Left ventricle myocardium superior (tissue), 1 donor: ENCODE measurements at regions of chr5 and their contacts with region 1.

Region 1: GRCh38 chr5:62354028-62354874 is 48.2 kb downstream of the KIF2A start:
- DNase-seq: no peak
- ATAC-seq: peak; percentile 44

Region 2: DNA sequence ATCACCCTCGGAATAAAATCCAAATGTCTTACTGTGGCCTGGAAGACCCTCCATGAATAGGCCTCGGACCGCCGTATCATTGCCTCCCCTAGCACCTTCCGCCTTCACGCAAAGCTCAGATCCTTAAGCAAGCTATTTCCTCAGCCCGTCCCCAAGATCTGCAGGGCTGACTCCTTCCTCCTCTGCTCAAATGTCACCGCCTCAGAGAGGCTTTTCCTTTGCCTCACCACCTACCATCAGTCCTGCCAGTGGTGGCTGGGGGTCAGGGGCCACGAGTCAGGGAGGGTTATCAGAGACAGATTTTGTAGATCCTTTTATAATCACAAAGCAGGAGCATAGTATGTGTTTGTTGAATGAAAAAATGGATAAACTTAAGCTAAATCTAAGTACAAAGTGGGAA is 122.7 kb before region 1 on chr5:
- intact Hi-C with region 1: loop called (anchors 10 kb)
- DNase-seq: no peak
- ATAC-seq: no peak

Region 3: DNA sequence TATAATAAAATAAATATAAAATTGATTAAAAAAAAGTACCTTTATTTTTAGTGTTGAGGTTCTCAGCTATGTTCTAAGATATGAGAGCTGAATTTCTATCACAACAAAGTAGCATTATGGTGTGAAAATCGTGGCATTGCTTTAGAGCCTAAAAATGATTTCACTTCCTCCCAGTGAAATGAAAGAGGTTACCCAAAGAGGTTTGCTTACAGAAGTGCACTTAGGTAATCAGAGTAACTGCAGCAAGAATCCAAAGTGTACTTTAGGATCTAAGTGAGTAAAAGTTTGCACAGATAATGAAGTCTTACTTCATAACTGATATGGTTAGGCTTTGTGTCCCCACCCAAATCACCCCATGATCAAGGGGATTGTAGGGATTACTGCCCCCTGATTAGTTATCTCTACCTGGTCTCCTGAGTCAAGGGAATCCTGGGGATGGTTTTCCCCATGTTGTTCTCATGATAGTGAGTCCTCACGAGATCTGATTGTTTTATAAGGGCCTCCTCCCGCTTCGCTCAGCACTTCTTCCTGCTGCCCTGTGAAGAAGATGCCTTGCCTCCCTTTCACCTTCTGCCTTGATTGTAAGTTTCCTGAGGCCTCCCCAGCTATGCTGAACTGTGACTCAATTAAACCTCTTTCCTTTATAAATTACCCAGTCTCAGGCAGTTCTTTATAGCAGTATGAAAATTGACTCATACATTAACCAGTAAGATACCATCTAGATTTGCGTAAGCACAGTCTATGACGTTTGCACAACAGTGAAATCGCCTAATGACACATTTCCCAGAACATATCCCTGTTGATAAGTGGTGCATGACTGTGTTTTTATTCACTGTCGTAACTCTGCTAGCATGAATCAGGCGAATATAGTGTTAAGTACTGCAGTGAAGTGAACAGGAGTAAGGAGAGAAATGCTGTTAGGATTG is 184.0 kb after region 1 on chr5:
- intact Hi-C with region 1: no loop called
- DNase-seq: no peak
- ATAC-seq: no peak

Region 4: GRCh38 chr5:62779010-62779422 is 424.8 kb after region 1 on chr5:
- intact Hi-C with region 1: no loop called
- DNase-seq: no peak
- ATAC-seq: peak; percentile 81